ENCODE measurements at regions of chr5 and their contacts with region 1.

Region 1: DNA sequence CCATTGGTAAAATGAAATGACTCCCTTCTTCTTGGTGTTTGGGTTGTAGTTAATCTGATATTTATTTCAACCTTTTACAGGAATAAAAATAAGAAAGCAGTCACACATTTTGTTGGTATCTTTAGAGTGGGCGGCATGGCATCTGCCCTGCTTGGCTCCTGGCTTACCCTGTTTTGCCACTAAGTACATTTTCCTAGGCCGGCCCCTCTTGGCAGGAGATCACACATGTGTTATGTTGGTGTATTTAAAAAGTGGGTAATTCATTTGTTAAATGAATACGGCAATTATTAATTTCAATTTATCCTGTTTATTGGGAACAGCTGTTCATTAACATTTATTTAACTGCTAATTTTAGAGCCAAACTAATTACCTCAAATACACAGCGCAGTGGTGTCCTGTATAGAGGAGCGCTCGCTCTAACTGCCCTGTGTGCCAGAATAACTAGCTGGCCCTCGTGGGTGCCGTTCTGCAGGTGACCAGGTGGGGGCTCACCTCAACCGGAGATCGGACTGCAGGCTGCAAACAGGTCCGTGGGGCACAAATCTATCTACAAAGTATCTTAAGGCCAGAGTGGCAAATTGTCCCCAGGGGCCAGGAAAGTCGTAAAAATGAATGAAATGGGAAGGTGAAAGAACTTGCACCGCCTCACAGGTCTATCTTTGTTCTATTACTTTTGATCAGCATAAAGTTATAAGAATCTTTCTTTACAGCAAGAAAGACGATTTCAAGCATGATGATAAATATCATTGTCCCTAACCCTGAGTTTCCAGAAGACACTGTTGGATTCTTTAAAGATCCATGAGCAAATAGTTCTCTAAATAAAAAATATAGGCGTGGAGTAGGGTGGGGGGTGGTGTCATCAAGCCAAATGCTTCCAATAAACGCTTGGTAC is 26.2 kb upstream of the GPR151 start:
- DNase-seq: peak; percentile 16 to 73 (median 58)
- ATAC-seq: peak; percentile 66 to 87 (median 75)
- H3K4me3 ChIP-seq: no peak overlapping the region
- H3K4me3 Mint-ChIP-seq: no peak overlapping the region
- H3K27ac ChIP-seq: no peak overlapping the region
- H3K27ac Mint-ChIP-seq: no peak overlapping the region
- H3K4me1 ChIP-seq: no peaks in the 10 kb centered on the region
- H3K4me1 Mint-ChIP-seq: peaks cover 0 to 6% (median 0%) of the 10 kb centered on the region in 3 donors
- H3K27me3 ChIP-seq: peaks cover 0 to 6% of the 10 kb centered on the region in 2 experiments
- H3K27me3 Mint-ChIP-seq: peaks cover 1 to 3% of the 10 kb centered on the region in 2 donors

Region 2: DNA sequence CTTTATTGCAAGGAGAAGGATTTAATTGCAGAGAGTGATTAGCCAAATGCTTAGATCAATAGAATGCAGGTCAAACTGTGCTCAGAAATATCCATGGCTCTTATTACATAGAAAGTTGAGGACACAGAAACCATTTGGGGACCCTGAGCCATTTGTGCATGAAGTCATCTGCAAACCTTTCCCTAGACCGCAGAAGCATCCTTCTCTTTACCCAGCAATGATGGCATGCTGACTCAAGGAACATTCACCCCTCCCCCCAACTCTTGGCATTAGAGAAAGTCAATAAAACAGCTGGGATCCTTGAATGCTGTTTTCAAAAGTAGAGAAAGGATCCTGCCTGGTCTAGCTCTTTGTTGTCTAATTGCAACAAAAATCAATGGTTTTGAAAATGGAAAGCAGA is 262.9 kb after region 1 on chr5:
- CTCF ChIA-PET with region 1: interaction called in 1 of 2 experiments, 10 read pairs
- POLR2A ChIA-PET with region 1: no interaction called
- DNase-seq: no peak
- ATAC-seq: no peak
- H3K4me3 ChIP-seq: no peak overlapping the region
- H3K4me3 Mint-ChIP-seq: no peak overlapping the region
- H3K27ac ChIP-seq: no peak overlapping the region
- H3K27ac Mint-ChIP-seq: no peak overlapping the region
- H3K4me1 ChIP-seq: no peaks in the 10 kb centered on the region
- H3K4me1 Mint-ChIP-seq: peaks cover 0 to 2% (median 0%) of the 10 kb centered on the region in 3 donors
- H3K27me3 ChIP-seq: no peaks in the 10 kb centered on the region
- H3K27me3 Mint-ChIP-seq: no peaks in the 10 kb centered on the region

Region 3: GRCh38 chr5:146890733-146891440 is 348.7 kb after region 1 on chr5:
- CTCF ChIA-PET with region 1: interaction called in 1 of 2 experiments, 10 read pairs
- POLR2A ChIA-PET with region 1: no interaction called
- DNase-seq: no peak
- ATAC-seq: no peak
- H3K4me3 ChIP-seq: no peak overlapping the region
- H3K4me3 Mint-ChIP-seq: no peak overlapping the region
- H3K27ac ChIP-seq: no peak overlapping the region
- H3K27ac Mint-ChIP-seq: no peak overlapping the region
- H3K4me1 ChIP-seq: peaks cover 0 to 5% of the 10 kb centered on the region in 2 experiments
- H3K4me1 Mint-ChIP-seq: peaks cover 0 to 14% (median 6%) of the 10 kb centered on the region in 3 donors
- H3K27me3 ChIP-seq: no peaks in the 10 kb centered on the region
- H3K27me3 Mint-ChIP-seq: no peaks in the 10 kb centered on the region

Region 4: DNA sequence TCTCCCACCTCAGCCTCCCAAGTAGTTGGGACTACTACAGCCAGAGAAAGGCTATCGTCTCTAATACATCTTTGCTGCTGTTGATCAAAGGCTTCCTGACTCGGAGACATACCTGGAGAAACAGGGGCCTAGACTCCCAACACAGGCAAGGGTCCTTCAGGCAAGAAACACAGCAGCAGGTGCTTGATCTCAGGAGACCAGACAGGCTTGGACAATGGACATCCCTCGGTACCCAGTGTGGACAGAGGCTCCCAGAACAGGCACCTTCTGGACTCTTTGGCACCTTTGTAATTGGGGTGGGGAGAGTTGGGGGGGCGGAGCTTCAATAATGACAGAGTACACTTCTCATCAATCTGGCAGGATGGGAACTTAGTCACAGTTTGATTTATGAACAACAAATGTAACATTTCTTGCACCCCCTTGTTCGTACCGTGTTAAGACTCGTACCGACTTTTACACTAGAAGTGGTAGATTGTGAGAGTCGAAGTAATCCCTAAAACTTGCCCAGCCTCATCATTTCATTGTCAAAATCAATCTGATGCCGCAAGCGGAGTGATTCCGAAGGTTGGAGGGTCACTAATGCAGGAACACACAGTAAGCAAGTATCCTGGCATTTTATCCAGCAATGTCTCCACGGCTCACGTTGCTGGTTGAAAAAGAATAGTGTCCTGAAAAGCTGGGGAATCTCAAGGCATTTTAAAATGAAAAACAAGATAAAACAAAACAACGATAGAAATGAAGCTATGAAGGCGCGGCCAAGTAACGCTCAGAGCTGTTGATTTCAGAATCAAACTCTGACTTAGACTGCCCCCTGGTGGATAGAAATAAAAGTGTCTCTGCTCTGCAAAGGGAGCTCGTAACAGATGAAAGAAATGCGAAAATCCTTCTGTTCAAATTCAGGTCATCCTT is 646.2 kb after region 1 on chr5:
- CTCF ChIA-PET with region 1: interaction called, 9 to 53 read pairs
- POLR2A ChIA-PET with region 1: no interaction called
- DNase-seq: peak in 27 of 35 experiments; percentile 1 to 76 (median 21)
- ATAC-seq: peak; percentile 52 to 66 (median 60)
- H3K4me3 ChIP-seq: no peak overlapping the region
- H3K4me3 Mint-ChIP-seq: no peak overlapping the region
- H3K27ac ChIP-seq: no peak overlapping the region
- H3K27ac Mint-ChIP-seq: no peak overlapping the region
- H3K4me1 ChIP-seq: peaks cover 0 to 5% of the 10 kb centered on the region in 2 experiments
- H3K4me1 Mint-ChIP-seq: peaks cover 4 to 6% (median 6%) of the 10 kb centered on the region in 3 donors
- H3K27me3 ChIP-seq: peaks cover 0 to 3% of the 10 kb centered on the region in 2 experiments
- H3K27me3 Mint-ChIP-seq: peaks cover 3 to 6% of the 10 kb centered on the region in 2 donors